ENCODE measurements at regions of chr4 and their contacts with region 1.

Region 1: DNA sequence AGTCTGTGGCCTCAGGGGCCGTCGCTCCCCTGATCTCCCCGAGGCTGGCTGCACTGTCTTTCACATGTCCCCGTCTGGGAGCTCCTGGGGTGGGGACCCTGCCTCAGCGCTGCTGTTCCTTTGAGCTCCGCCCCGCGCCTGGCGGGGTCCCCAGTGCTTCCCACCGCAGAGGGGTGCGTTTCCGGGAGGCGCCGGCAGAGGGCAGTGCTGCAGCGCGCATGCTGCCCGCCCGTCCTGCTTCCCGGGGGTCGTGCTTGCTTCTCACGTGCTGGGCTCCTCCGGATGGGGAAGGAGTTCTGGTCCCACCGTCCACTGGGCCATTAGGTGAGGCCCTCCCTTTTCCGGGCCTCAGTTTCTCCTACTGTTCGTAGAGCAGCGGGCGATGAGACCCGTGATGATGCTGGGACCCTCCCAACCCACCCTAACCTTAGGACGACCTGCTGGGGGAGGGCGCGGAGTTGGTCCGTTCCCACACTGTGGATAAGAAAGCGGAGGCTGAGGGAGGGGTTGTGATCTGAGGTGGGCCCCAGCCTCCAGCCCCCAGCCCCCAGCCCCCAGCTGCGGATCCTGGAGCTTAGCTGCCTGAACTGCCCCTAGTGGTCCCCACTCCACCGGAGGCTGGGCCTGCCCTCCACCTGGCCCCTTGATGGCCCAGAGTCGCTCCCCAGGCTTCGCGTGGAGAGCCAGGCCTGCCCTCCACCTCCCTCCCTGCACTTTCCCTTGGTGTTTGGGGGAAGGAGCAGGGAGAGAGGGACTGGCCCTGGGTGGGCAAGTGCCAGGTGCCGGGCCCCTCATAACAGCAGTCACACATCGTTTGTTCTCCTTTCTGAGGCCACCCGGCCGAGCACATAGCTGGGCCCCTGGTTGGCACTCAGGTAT is 15.3 kb downstream of the CPZ start:
- DNase-seq: peak; percentile 38
- H3K4me3 Mint-ChIP-seq: no peak overlapping the region
- H3K27ac Mint-ChIP-seq: no peak overlapping the region
- H3K4me1 Mint-ChIP-seq: no peaks in the 10 kb centered on the region
- H3K27me3 Mint-ChIP-seq: peaks cover 4% of the 10 kb centered on the region

Region 2: GRCh38 chr4:8886612-8887406 is 279.0 kb after region 1 on chr4:
- CTCF ChIA-PET with region 1: no interaction called
- intact Hi-C with region 1: loop called (anchors 10 kb)
- DNase-seq: no peak
- H3K4me3 Mint-ChIP-seq: no peak overlapping the region
- H3K27ac Mint-ChIP-seq: no peak overlapping the region
- H3K4me1 Mint-ChIP-seq: no peaks in the 10 kb centered on the region
- H3K27me3 Mint-ChIP-seq: peaks cover 52% of the 10 kb centered on the region

Region 3: GRCh38 chr4:8917868-8918783 is 310.3 kb after region 1 on chr4:
- CTCF ChIA-PET with region 1: interaction called, 21 read pairs
- intact Hi-C with region 1: loop called (anchors 1 kb)
- DNase-seq: peak; percentile 77
- H3K4me3 Mint-ChIP-seq: no peak overlapping the region
- H3K27ac Mint-ChIP-seq: no peak overlapping the region
- H3K4me1 Mint-ChIP-seq: peaks cover 2% of the 10 kb centered on the region
- H3K27me3 Mint-ChIP-seq: peaks cover 11% of the 10 kb centered on the region

Measured in activated naive CD4-positive, alpha-beta T cell treated with anti-CD3 and anti-CD28 coated beads for 36 hours (primary cell).